ENCODE measurements at regions of chr21 and their contacts with region 1.

Region 1: DNA sequence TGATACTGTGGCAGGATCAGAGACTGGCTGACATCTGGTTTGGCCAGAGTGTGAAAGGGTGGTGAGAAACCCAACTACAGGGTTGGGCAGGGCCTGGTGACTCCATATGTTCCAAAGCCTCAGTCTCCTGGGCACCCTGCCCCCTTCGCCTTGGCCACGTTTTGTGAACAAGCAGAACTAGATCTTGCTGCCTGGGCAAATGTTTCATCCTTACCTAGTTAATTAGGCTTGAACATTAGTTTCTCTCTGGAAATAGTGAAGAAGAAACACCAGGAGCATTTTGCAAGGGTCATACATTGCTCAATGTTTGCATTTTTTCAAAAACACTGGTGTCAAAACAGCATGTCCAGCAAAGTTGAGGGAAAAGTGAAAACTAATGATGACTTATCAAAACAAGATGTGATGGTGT is 60.5 kb downstream of the MAP3K7CL start:
- DNase-seq: no peak
- H3K4me3 ChIP-seq: no peak overlapping the region
- CTCF ChIP-seq: no peak

Region 2: DNA sequence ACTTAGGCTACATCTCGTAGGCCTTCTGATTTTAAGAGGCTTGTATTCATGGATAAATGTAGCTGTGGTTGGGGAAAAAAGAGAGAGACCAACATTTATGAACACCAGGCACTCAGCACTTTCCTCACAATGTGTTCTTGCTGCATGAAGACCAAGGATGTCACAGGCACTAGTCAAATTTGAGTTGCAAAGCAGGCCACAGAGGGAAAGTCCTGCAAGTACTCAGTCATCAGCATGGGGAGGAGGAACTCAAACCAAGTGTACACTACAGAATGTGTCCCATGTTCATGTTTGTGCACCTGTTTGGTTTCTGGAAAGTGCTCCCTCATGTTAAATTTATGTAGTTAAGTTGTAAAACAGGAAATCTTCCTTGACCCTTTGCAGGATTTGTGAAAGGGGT is 69.2 kb before region 1 on chr21:
- in situ Hi-C with region 1: loop called (anchors 5 kb)
- DNase-seq: no peak
- H3K4me3 ChIP-seq: no peak overlapping the region
- CTCF ChIP-seq: no peak

Region 3: GRCh38 chr21:29155118-29155932 is 35.6 kb before region 1 on chr21:
- in situ Hi-C with region 1: no loop called
- DNase-seq: peak; percentile 59
- H3K4me3 ChIP-seq: peak overlapping the region; percentile 14
- CTCF ChIP-seq: no peak

Measured in astrocyte of the cerebellum (primary cell).